CD8-positive, alpha-beta T cell (primary cell): ENCODE measurements at regions of chr18 and their contacts with region 1.

Region 1: DNA sequence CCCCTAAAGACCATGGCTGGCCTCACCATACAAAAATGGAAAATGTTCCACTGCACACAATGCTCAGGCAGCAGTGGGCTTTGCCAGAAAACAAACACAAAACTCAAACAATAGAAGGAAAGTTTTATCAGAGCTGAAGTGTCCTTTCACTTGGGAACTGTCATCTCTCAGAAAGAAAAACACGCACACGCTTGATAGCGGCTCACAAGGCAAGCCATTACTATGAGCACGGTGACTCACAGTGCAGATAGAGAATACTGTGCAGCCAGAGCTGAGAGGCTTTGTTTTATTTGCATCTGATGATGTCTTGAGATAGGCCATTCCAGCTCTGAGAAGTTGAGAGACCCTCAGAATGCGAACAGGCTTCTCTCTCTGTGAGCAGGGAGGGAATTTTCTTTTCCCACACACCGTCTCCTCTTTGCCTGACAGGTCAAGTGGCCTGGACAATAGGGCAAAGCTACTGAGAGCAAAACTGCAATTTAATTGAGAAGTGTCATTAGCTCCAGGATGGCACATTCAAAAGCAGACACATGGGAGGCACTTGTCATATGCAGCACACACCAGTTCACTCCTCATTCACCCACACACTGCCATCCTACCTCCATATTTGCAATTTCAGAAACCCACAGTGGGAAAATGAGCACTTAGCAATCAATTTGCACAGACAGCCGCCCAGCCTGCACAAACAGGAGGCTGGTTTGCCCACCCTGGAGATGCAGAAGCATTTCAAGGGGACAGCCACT is 236.6 kb downstream of the SS18 start:
- DNase-seq: no peak
- ATAC-seq: no peak
- H3K4me3 ChIP-seq: no peak overlapping the region
- H3K4me3 Mint-ChIP-seq: no peak overlapping the region
- H3K27ac ChIP-seq: no peak overlapping the region
- H3K27ac Mint-ChIP-seq: no peak overlapping the region
- H3K4me1 ChIP-seq: no peaks in the 10 kb centered on the region
- H3K4me1 Mint-ChIP-seq: no peaks in the 10 kb centered on the region
- H3K27me3 ChIP-seq: no peaks in the 10 kb centered on the region
- H3K27me3 Mint-ChIP-seq: peaks cover 11% of the 10 kb centered on the region
- CTCF ChIP-seq: no peak

Region 2: DNA sequence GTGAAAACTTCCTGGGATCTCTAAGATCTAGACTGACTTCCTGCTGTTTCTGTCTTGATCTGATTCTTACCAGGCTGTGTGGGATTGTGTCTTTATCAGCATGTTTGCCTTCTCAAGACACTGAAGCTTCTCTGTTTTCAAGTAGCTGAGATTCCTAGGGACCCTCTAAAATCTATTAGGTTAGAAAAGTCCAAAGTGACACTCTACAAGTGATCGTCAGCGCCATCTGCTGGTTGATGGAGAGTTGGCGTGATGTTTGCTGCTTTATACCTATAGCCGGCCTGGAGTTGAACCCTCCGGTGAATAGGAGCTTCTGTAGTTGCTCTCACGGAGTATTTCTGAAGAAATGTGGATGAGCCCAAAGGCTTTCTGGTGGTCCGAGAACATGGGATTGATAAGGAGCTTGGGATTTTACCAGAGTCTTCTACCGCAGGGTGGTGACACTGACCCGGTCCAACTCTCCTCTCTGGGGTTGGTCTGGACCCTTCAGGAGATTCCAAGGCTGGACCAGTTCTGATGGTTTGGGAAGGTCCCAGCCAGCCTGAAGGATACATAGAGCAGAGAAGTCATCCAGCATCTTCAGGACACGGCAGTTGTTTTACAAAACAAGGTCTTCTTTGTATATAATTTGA is 1935.3 kb before region 1 on chr18:
- CTCF ChIA-PET with region 1: no interaction called
- POLR2A ChIA-PET with region 1: no interaction called
- intact Hi-C with region 1: no loop called
- DNase-seq: peak; percentile 66 to 88 (median 83)
- ATAC-seq: peak; percentile 87
- H3K4me3 ChIP-seq: no peak overlapping the region
- H3K4me3 Mint-ChIP-seq: no peak overlapping the region
- H3K27ac ChIP-seq: no peak overlapping the region
- H3K27ac Mint-ChIP-seq: no peak overlapping the region
- H3K4me1 ChIP-seq: no peaks in the 10 kb centered on the region
- H3K4me1 Mint-ChIP-seq: peaks cover 9% of the 10 kb centered on the region
- H3K27me3 ChIP-seq: no peaks in the 10 kb centered on the region
- H3K27me3 Mint-ChIP-seq: no peaks in the 10 kb centered on the region
- CTCF ChIP-seq: peak; percentile 97

Region 3: DNA sequence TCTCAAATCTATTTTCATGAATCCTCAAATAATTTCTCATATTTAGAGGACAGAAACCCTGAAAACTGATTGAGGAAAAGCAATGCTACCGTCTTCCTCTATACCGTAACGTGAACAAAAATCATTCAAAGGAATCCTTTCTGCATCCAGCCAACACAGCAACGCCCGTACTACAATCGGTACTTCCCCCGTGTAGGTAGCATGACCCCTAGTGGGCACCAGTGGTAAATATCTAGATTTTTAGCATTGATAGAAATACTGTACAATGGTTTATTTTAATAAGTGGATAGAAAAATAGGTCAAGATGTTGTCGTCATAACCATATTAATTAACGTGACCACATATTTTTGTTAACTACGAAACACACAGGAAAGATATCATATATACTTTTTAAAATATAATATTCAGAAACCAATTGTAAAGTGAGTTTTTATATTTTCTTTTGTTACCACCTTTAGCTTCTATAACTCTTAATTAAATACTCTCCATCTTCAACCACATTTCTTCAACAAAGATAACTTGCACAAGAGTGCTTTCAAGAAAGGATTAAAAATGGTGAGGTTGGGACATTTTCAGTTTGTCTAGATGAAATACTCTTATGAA is 42.4 kb after region 1 on chr18:
- CTCF ChIA-PET with region 1: no interaction called
- POLR2A ChIA-PET with region 1: no interaction called
- intact Hi-C with region 1: loop called in 1 of 2 experiments (anchors 1 kb)
- DNase-seq: peak in 3 of 9 experiments; percentile 12 to 42 (median 28)
- ATAC-seq: no peak
- H3K4me3 ChIP-seq: no peak overlapping the region
- H3K4me3 Mint-ChIP-seq: no peak overlapping the region
- H3K27ac ChIP-seq: no peak overlapping the region
- H3K27ac Mint-ChIP-seq: no peak overlapping the region
- H3K4me1 ChIP-seq: no peaks in the 10 kb centered on the region
- H3K4me1 Mint-ChIP-seq: peaks cover 1% of the 10 kb centered on the region
- H3K27me3 ChIP-seq: no peaks in the 10 kb centered on the region
- H3K27me3 Mint-ChIP-seq: peaks cover 7% of the 10 kb centered on the region
- CTCF ChIP-seq: peak; percentile 56